Ovary (tissue), 10 donors: ENCODE measurements at regions of chr14 and their contacts with region 1.

Region 1: GRCh38 chr14:80954687-80955299 is 628 bp upstream of the TSHR start:
- DNase-seq: peak; percentile 62 to 79 (median 73)
- H3K4me3 ChIP-seq: peak overlapping the region; percentile 38
- H3K27ac ChIP-seq: no peak overlapping the region
- H3K4me1 ChIP-seq: no peaks in the 10 kb centered on the region
- H3K27me3 ChIP-seq: no peaks in the 10 kb centered on the region
- CTCF ChIP-seq: peak; percentile 56 to 76 (median 61)
- EP300 ChIP-seq: no peak
- POLR2A ChIP-seq: no peak

Region 2: GRCh38 chr14:80987235-80988032 is 32.6 kb after region 1 on chr14:
- intact Hi-C with region 1: loop called in 1 of 4 experiments (anchors 1 kb)
- DNase-seq: peak in 4 of 5 donors; percentile 16 to 59 (median 33)
- H3K4me3 ChIP-seq: no peak overlapping the region
- H3K27ac ChIP-seq: no peak overlapping the region
- H3K4me1 ChIP-seq: no peaks in the 10 kb centered on the region
- H3K27me3 ChIP-seq: no peaks in the 10 kb centered on the region
- CTCF ChIP-seq: peak; percentile 48 to 67 (median 60)
- EP300 ChIP-seq: no peak
- POLR2A ChIP-seq: no peak

Region 3: DNA sequence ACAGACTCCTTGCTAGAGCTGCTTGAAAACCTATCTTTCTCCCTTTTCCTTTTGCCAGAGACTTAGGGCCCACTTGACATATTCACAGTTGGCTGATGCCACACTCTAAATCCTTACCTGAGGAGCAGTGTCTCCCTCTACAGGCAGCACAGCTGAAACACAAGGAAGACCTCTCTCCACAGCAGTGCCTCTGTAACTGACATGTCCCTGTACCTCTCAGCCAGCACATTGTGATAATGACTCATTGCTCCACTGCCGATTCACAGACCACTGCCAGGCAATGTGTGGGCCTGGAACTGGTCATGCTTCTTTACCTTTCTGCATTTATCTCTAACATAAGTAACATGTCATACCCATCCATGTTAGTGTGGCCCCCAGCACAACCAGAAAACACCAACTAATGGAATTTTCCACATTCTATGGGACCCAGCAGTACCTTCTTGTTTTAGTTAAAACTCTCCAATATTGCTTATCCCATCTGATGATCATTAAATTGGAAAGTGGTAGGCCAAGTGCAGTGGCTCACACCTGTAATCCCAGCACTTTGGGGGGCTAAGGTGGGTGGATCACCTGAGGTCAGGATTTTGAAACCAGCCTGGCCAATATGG is 209.5 kb after region 1 on chr14:
- intact Hi-C with region 1: loop called in 1 of 4 experiments (anchors 10 kb)
- DNase-seq: peak in 1 of 5 donors; percentile 25
- H3K4me3 ChIP-seq: no peak overlapping the region
- H3K27ac ChIP-seq: no peak overlapping the region
- H3K4me1 ChIP-seq: no peaks in the 10 kb centered on the region
- H3K27me3 ChIP-seq: no peaks in the 10 kb centered on the region
- CTCF ChIP-seq: no peak
- EP300 ChIP-seq: no peak
- POLR2A ChIP-seq: no peak

Region 4: DNA sequence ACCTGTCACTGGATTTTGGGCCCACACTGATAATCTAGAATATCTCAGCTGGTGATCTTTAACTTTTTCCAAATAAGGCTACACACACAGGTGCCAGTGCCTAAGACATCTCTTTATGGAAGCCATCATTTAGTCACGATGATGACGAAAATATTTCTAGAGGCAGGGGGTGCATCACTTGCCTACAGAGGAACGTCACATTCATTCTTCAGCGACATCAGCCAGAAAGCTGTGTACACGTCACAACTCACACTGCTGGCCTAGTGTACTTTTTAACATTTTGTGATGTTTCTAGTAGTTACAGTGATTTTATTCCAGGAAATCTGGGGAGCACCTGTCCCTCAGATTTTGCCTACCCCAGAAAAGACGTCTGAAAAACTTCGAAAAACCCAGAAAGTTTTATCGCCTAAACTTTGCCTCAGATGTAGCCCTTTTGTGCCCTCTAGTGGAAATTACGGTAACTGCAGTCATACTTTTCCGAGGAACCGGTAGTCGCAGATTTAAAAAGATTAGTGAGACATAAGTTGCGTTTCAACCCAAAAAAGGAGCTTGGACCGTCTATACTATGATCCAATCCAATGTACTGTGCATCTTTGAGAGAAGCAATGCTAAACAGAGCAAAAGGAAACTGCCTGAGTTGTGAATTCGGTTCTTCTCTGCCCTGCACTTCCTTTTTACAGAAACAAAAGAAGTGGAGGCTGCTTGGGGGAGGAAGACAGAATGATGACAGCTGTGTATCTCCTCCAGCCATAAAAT is 509.6 kb after region 1 on chr14:
- intact Hi-C with region 1: loop called in 1 of 4 experiments (anchors 10 kb)
- DNase-seq: peak in 2 of 5 donors; percentile 23 to 62
- H3K4me3 ChIP-seq: peak overlapping the region; percentile 36
- H3K27ac ChIP-seq: no peak overlapping the region
- H3K4me1 ChIP-seq: no peaks in the 10 kb centered on the region
- H3K27me3 ChIP-seq: no peaks in the 10 kb centered on the region
- CTCF ChIP-seq: peak; percentile 79 to 81 (median 79)
- EP300 ChIP-seq: no peak
- POLR2A ChIP-seq: no peak